Activated CD8-positive, alpha-beta T cell treated with anti-CD3 and anti-CD28 coated beads for 36 hours (primary cell): ENCODE measurements at regions of chr5 and their contacts with region 1.

Region 1: GRCh38 chr5:75053304-75054133 is 1.2 kb upstream of the GCNT4 start:
- DNase-seq: peak; percentile 69
- ATAC-seq: peak; percentile 24
- H3K4me3 Mint-ChIP-seq: peak overlapping the region; percentile 81
- H3K27ac Mint-ChIP-seq: peak overlapping the region; percentile 89
- H3K4me1 Mint-ChIP-seq: peaks cover 75% of the 10 kb centered on the region
- H3K27me3 Mint-ChIP-seq: no peaks in the 10 kb centered on the region
- CTCF ChIP-seq: no peak

Region 2: DNA sequence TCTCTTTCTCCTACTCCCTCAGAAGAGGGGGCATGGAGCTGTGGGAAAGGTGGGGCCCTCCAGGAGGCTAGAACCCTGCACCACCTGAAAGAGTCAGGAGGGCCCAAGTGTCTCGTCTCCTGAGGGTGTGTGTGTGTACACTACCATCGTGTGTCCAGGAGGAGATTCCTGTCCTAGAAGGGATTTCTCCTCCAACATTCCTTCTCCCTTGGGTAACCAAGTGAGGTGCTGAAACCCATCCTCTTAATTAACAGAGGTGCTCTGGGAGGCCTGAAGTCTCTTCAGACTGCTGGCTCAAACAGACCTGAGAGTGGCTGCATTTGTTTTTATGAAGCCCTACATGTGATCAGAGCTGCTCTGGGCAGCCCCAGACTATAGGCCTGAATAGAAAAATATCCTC is 126.2 kb before region 1 on chr5:
- CTCF ChIA-PET with region 1: interaction called, 10 read pairs
- POLR2A ChIA-PET with region 1: interaction called, 3 read pairs
- intact Hi-C with region 1: no loop called
- DNase-seq: no peak
- ATAC-seq: no peak
- H3K4me3 Mint-ChIP-seq: no peak overlapping the region
- H3K27ac Mint-ChIP-seq: no peak overlapping the region
- H3K4me1 Mint-ChIP-seq: no peaks in the 10 kb centered on the region
- H3K27me3 Mint-ChIP-seq: no peaks in the 10 kb centered on the region
- CTCF ChIP-seq: no peak

Region 3: DNA sequence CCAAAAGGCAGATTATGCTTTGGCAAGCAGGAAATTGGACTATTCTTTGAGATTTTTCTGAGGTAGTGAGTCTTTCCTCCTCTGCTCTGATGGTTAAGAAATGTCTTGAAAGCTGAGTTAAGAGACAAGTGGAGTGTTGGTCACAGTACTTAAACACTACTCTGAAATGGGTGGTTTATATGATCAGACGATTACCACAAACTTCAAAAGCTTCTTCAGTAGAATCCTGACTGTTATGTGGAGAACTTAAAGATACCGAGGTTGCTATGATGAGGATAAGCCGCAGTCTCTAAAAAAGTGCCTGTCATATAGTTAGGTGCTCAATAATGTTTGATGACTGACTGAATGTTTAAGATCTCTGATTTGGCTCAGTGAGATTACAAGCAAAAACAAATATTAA is 25.4 kb before region 1 on chr5:
- CTCF ChIA-PET with region 1: interaction called, 16 read pairs
- POLR2A ChIA-PET with region 1: interaction called, 5 read pairs
- intact Hi-C with region 1: no loop called
- DNase-seq: no peak
- ATAC-seq: peak; percentile 69
- H3K4me3 Mint-ChIP-seq: no peak overlapping the region
- H3K27ac Mint-ChIP-seq: peak overlapping the region; percentile 18
- H3K4me1 Mint-ChIP-seq: peaks cover 46% of the 10 kb centered on the region
- H3K27me3 Mint-ChIP-seq: no peaks in the 10 kb centered on the region
- CTCF ChIP-seq: no peak

Region 4: GRCh38 chr5:75040991-75041390 is 12.5 kb before region 1 on chr5:
- CTCF ChIA-PET with region 1: interaction called, 31 read pairs
- POLR2A ChIA-PET with region 1: interaction called, 4 read pairs
- intact Hi-C with region 1: no loop called
- DNase-seq: no peak
- ATAC-seq: no peak
- H3K4me3 Mint-ChIP-seq: no peak overlapping the region
- H3K27ac Mint-ChIP-seq: no peak overlapping the region
- H3K4me1 Mint-ChIP-seq: peaks cover 44% of the 10 kb centered on the region
- H3K27me3 Mint-ChIP-seq: no peaks in the 10 kb centered on the region
- CTCF ChIP-seq: no peak

Region 5: DNA sequence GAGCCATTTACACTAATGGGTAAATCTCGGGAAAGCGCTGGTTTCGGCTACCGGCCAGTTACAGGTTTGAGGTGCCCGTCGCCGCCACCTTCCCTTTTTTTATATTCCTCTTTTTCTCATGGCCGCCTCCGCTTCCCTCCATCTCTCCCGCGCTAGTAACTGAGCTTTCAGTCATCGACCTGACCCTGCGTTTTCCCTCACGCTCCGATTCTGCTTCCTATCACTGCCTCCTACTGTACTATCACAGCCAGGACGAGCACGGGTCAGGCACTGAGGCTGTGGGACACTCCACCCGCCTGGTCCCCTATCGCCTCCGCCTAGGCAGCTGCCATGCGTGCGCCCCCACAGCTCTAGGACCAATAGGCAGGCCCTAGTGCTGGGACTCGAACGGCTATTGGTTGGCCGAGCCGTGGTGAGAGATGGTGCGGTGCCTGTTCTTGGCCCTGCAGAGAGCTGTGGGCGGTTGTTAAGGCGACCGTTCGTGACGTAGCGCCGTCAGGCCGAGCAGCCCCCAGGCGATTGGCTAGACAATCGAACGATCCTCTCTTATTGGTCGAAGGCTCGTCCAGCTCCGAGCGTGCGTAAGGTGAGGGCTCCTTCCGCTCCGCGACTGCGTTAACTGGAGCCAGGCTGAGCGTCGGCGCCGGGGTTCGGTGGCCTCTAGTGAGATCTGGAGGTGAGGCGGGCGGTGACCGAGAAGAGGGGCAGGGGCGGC is 283.3 kb after region 1 on chr5 and contains the start of gene HMGCR:
- CTCF ChIA-PET with region 1: interaction called, 3 read pairs
- POLR2A ChIA-PET with region 1: interaction called, 4 read pairs
- intact Hi-C with region 1: loop called (anchors 10 kb)
- DNase-seq: peak; percentile 99
- ATAC-seq: peak; percentile 96
- H3K4me3 Mint-ChIP-seq: no peak within 1 kb of the TSS
- H3K27ac Mint-ChIP-seq: no peak within 1 kb of the TSS
- H3K4me1 Mint-ChIP-seq: peaks cover 32% of the 10 kb centered on the region
- H3K27me3 Mint-ChIP-seq: no peaks in the 10 kb centered on the region
- CTCF ChIP-seq: peak; percentile 6
- total RNA-seq, gene HMGCR: 50.3 to 50.8 TPM